ENCODE measurements at regions of chr2 and their contacts with region 1.

Region 1: DNA sequence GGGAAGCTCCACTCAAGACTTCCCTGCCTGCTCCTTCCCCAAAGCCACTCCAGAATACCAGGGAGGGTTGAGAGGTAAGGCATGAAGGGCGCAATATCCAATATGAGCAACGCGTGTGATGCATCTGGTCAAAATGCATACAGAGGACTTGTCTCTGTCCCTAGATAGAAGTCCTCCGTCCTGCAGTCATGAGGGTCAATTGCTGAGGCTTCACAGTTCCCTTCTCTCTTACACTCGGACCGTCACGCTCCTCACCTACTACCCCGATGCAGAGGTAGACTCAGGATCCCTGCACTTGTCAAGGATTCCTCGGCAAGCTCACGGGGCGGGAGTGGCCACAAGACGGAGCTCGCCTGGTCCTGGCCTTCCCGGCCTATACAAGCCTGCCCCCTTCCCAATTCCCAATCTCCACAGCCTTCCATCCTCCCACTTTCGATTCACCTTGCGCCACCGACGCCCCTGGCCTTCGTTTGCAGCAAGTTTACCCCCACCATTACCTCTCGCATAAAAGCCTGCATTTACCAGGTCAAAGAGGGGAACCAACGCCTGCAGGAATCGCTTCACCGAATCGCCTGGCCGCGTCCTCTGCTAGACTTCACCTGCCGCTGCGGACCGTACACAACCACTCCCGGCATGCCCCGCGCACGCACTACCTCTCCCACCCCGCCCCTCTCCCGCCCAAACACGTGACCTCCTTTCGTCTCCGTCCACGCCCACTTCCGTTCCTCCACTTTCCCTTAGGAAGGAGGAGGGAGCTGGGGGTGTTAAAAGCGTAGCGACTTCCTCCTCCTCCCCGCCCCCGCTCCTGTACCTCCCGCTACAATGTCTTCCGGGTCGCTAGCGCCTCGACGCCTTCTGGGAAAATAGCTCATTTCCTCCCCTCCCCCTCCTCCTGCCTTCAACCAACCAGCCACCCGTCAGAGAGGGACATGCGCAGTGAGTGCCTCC is at the start of gene ORC4:
- DNase-seq: peak; percentile 99
- H3K4me3 Mint-ChIP-seq: peak within 1 kb of the TSS; percentile 100
- H3K27ac Mint-ChIP-seq: peak within 1 kb of the TSS; percentile 97
- H3K4me1 Mint-ChIP-seq: peaks cover 39% of the 10 kb centered on the region
- H3K27me3 Mint-ChIP-seq: no peaks in the 10 kb centered on the region
- total RNA-seq, gene ORC4: 34.1 to 34.9 TPM

Region 2: DNA sequence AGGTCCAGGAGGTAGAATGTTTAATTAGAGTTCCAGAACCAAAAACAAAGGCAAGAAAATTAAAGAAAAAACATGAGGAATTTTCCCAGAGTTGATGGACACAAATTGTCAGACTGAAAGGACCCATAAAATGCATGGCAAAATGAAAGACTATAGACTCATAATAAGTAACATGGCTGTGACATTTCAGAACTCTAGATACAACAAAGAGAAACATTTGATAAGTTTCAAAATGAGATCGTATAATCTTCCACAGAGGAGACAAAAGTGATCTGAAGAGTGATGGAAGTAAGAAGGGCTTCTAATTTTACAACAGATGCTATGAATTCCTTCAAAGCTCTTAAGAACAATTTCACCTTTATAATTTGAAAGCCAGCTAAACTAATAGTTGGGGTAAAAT is 20.3 kb before region 1 on chr2:
- CTCF ChIA-PET with region 1: no interaction called
- POLR2A ChIA-PET with region 1: no interaction called
- intact Hi-C with region 1: loop called (anchors 2 kb)
- DNase-seq: no peak
- H3K4me3 Mint-ChIP-seq: no peak overlapping the region
- H3K27ac Mint-ChIP-seq: no peak overlapping the region
- H3K4me1 Mint-ChIP-seq: peaks cover 33% of the 10 kb centered on the region
- H3K27me3 Mint-ChIP-seq: no peaks in the 10 kb centered on the region

Region 3: DNA sequence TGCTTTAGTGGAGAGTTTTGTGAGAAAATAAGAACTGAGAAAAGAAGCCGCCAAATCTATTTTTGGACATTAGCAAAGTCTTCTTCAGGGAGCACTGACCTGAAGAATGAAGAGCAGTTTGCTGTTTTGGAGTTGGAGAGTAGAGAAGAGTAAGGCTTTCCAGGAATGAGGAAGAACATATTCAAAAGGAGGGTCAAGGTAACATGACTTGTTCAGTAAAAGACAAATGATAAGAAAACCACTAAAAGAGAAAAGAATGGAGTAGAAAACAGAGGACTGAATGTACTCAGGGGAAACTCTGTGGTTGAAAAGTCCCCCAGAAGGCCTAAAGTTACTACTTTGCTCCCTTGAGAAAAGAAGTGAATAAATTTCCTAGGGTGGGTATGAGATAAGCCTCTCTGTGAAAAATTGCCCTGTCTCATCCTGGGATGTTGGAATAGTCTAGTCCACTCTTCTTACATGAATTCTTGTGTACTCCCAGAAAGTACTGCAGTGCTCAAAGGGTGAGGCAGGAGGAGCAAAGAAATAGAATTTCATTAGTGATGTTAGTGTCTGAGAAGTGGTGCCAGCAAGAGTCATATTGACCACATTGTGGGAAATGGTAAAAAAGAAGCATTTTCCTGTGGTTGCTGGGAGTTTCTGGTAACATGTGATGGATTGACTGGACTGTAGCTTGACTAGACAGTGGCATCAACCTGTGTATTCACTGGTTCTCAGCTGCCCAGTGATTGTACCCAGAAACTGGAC is 28.3 kb after region 1 on chr2:
- CTCF ChIA-PET with region 1: no interaction called
- POLR2A ChIA-PET with region 1: no interaction called
- intact Hi-C with region 1: loop called (anchors 1 kb)
- DNase-seq: no peak
- H3K4me3 Mint-ChIP-seq: no peak overlapping the region
- H3K27ac Mint-ChIP-seq: no peak overlapping the region
- H3K4me1 Mint-ChIP-seq: peaks cover 32% of the 10 kb centered on the region
- H3K27me3 Mint-ChIP-seq: no peaks in the 10 kb centered on the region

Region 4: GRCh38 chr2:148552675-148553331 is 532.4 kb after region 1 on chr2:
- CTCF ChIA-PET with region 1: no interaction called
- POLR2A ChIA-PET with region 1: interaction called, 4 read pairs
- intact Hi-C with region 1: loop called (anchors 2 kb)
- DNase-seq: peak; percentile 36
- H3K4me3 Mint-ChIP-seq: no peak overlapping the region
- H3K27ac Mint-ChIP-seq: no peak overlapping the region
- H3K4me1 Mint-ChIP-seq: peaks cover 4% of the 10 kb centered on the region
- H3K27me3 Mint-ChIP-seq: no peaks in the 10 kb centered on the region

Region 5: GRCh38 chr2:149587220-149587949 is 1567.0 kb after region 1 on chr2 and contains the start of gene MMADHC:
- CTCF ChIA-PET with region 1: no interaction called
- POLR2A ChIA-PET with region 1: no interaction called
- intact Hi-C with region 1: loop called (anchors 5 kb)
- DNase-seq: peak; percentile 96
- H3K4me3 Mint-ChIP-seq: peak within 1 kb of the TSS; percentile 98
- H3K27ac Mint-ChIP-seq: peak within 1 kb of the TSS; percentile 97
- H3K4me1 Mint-ChIP-seq: peaks cover 42% of the 10 kb centered on the region
- H3K27me3 Mint-ChIP-seq: peaks cover 11% of the 10 kb centered on the region
- total RNA-seq, gene MMADHC: 130 to 132 TPM